ENCODE measurements at regions of chr18 and their contacts with region 1.

Region 1: DNA sequence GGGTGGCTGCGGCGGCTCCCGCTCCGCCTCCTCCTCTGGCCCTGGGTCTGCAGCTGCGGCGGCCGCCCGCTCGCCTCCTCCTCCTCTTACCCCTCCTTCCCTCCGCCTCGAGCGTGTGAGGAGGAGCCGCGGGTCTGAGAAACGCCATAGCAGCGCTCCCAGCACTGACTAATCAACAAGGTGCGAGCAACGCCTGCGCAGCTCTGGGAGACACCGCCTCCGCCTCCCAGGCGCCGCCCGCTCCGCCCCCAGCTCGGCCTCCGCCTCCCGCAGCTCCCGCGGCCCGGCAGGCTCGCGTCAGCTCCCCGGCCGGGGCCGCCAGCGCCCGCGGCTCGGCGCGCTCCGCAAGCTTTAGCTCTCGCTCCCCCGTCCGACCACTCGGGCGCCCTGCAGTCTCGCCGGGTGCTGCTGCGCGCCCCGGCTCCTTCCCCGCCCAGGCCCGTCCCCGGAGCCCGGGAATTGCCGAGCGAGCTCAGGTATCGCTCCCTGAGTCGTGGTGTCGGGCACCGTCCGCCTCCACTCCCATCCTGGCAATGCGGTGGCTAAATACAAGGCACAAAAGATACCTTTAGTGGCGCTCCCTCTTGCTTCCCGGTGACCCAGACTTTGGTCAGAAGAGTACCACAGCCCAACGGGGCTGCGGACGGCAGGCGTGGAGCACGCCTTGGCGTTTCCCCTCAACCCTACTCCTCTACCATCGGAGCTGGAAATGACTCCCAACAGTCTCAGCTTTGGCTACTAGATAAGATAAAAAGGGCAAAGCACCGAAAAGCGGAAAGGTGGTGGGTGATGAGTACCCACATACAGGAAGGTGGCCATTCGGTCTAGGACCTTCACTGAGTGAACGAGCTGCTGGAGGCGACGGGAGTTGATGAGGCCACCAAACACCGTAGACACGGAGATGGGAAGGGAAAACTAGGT is at the start of gene GAREM1:
- DNase-seq: peak; percentile 83 to 91
- H3K4me3 ChIP-seq: peak within 1 kb of the TSS; percentile 87 to 98 (median 90)
- H3K27ac ChIP-seq: peak within 1 kb of the TSS; percentile 70; the same call in 1 of the 2 replicates
- H3K4me1 ChIP-seq: peaks cover 3 to 12% (median 6%) of the 10 kb centered on the region in 4 experiments
- H3K27me3 ChIP-seq: peaks cover 0 to 14% (median 9%) of the 10 kb centered on the region in 4 experiments; a peak in 4 of 7 replicates
- CTCF ChIP-seq: peak; percentile 50 to 60 (median 55)
- EP300 ChIP-seq: no peak
- POLR2A ChIP-seq: peak; percentile 72 to 88
- RAD21 ChIP-seq: peak; percentile 48 to 71
- total RNA-seq, gene GAREM1: 9.2 and 9.6 TPM in 2 replicates

Region 2: GRCh38 chr18:32494111-32494510 is 23.1 kb after region 1 on chr18:
- CTCF ChIA-PET with region 1: interaction called, 19 read pairs
- POLR2A ChIA-PET with region 1: no interaction called
- DNase-seq: no peak
- H3K4me3 ChIP-seq: no peak overlapping the region
- H3K27ac ChIP-seq: no peak overlapping the region
- H3K4me1 ChIP-seq: no peaks in the 10 kb centered on the region
- H3K27me3 ChIP-seq: no peaks in the 10 kb centered on the region
- CTCF ChIP-seq: no peak
- EP300 ChIP-seq: no peak
- POLR2A ChIP-seq: no peak
- RAD21 ChIP-seq: no peak

Measured in H1 (cell line).